ENCODE measurements at regions of chr6 and their contacts with region 1.

Region 1: GRCh38 chr6:159463119-159463829 is 229.8 kb downstream of the SOD2 start:
- DNase-seq: peak; percentile 11
- H3K4me3 ChIP-seq: no peak overlapping the region
- H3K27ac ChIP-seq: no peak overlapping the region
- H3K4me1 ChIP-seq: no peaks in the 10 kb centered on the region
- H3K27me3 ChIP-seq: peaks cover 2% of the 10 kb centered on the region
- CTCF ChIP-seq: peak; percentile 27 to 31

Region 2: DNA sequence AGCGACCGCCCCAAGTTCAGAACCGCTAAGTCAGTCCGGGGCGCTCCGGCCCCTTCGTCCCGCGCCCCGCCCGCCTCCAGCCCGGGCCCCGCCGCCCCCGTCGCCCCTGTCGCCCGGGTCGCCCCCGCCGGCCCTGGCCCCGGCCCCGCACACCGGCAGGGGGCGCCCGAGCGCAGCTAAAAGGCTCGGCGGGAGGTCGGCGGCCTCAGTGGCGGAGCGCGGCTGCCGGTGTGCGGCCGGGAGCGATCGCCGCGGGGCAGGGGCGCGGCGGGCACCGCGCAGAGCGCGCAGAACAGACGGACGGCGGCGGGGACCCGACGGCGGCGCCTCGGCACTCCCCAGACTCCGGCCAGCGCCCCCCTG is 294.1 kb before region 1 on chr6 and contains the start of gene FNDC1:
- CTCF ChIA-PET with region 1: no interaction called
- dilution Hi-C with region 1: no loop called
- in situ Hi-C with region 1: loop called in 1 of 2 experiments (anchors 5 kb)
- intact Hi-C with region 1: loop called (anchors 1 kb)
- DNase-seq: no peak
- H3K4me3 ChIP-seq: peak within 1 kb of the TSS in 2 of 3 experiments; percentile 11 to 28
- H3K27ac ChIP-seq: no peak within 1 kb of the TSS
- H3K4me1 ChIP-seq: peaks cover 12% of the 10 kb centered on the region
- H3K27me3 ChIP-seq: peaks cover 27% of the 10 kb centered on the region
- CTCF ChIP-seq: peak in 1 of 2 donors; percentile 11
- total RNA-seq, gene FNDC1: 0.05 to 0.33 TPM

Region 3: DNA sequence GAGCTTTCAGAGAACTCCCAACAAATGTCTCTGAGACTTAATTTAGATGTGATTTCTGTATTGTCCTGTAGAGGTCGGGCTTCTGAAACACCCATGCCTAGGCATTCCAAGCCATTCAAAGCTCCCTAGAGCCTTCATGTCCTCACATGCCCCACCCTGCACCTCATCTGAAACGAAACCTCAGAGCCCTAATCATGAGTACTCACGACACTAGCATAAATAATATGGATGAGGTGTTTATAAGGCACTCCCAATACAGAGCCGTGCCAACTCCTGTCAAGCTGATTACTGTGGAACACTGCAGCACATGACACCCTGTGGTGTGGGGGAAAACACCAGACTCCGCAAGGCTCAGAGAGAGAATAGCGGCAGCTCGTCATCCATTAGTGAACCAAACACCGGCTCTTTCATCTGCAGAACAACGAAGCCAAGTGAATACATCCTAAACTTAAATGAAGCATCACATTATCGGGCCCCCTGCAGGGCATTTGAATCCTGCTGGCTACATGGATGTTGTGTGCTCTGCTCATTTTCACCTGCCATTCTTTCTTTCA is 210.2 kb before region 1 on chr6:
- CTCF ChIA-PET with region 1: interaction called, 8 read pairs
- dilution Hi-C with region 1: no loop called
- in situ Hi-C with region 1: no loop called
- intact Hi-C with region 1: loop called (anchors 1 kb)
- DNase-seq: peak; percentile 94
- H3K4me3 ChIP-seq: peak overlapping the region; percentile 30 to 41 (median 37)
- H3K27ac ChIP-seq: peak overlapping the region; percentile 21
- H3K4me1 ChIP-seq: peaks cover 4% of the 10 kb centered on the region
- H3K27me3 ChIP-seq: no peaks in the 10 kb centered on the region
- CTCF ChIP-seq: peak; percentile 70 to 80

Region 4: DNA sequence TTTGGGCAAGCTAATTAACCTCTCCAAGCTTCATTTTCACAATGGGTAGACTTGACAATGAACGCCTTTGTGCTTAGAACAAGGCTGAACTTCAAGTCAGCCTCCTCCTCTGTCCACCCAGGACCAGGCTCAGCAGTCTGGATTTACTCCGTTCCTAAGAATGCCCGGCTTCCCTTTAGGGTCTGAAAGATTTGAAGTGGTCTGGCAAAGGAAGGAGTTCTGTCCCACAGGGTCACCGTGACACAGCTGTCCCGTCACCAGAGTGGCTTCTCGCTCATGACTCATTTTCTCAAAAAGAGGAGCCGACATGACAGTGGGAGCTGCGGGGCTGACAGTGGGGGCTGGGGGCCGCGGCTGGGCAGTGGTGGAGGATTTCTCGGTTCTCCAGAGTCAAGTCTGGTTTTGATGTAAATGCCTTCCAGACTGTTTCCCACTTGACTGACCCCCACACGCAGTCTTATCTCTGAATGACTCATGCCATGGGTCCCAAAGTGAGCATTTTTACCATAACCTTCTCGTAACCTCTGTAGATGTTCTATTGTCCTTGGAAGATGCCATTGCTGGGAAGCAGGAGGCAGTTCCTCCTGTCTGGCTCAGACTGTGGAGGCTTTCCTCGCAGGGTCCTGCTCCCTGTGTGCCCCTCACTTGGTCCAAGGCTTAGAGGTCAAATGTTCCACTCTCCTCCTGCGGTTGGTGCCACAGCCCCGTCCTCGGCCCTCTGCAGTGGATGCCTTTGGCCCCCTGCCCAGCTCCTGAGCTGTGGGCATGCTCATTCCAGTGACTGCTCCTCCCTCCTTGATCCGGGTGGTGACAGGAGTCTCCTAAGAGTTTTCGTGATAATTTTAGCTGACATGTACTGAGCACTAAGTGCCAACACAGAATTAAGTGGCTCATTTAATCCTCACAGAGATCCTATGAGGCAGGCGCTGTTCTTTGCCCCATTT is 41.0 kb before region 1 on chr6:
- CTCF ChIA-PET with region 1: no interaction called
- dilution Hi-C with region 1: no loop called
- in situ Hi-C with region 1: no loop called
- intact Hi-C with region 1: no loop called
- DNase-seq: no peak
- H3K4me3 ChIP-seq: no peak overlapping the region
- H3K27ac ChIP-seq: no peak overlapping the region
- H3K4me1 ChIP-seq: no peaks in the 10 kb centered on the region
- H3K27me3 ChIP-seq: no peaks in the 10 kb centered on the region
- CTCF ChIP-seq: no peak

Region 5: GRCh38 chr6:159434410-159434809 is 28.9 kb before region 1 on chr6:
- CTCF ChIA-PET with region 1: no interaction called
- dilution Hi-C with region 1: no loop called
- in situ Hi-C with region 1: no loop called
- intact Hi-C with region 1: no loop called
- DNase-seq: no peak
- H3K4me3 ChIP-seq: no peak overlapping the region
- H3K27ac ChIP-seq: no peak overlapping the region
- H3K4me1 ChIP-seq: no peaks in the 10 kb centered on the region
- H3K27me3 ChIP-seq: no peaks in the 10 kb centered on the region
- CTCF ChIP-seq: no peak

Region 6: DNA sequence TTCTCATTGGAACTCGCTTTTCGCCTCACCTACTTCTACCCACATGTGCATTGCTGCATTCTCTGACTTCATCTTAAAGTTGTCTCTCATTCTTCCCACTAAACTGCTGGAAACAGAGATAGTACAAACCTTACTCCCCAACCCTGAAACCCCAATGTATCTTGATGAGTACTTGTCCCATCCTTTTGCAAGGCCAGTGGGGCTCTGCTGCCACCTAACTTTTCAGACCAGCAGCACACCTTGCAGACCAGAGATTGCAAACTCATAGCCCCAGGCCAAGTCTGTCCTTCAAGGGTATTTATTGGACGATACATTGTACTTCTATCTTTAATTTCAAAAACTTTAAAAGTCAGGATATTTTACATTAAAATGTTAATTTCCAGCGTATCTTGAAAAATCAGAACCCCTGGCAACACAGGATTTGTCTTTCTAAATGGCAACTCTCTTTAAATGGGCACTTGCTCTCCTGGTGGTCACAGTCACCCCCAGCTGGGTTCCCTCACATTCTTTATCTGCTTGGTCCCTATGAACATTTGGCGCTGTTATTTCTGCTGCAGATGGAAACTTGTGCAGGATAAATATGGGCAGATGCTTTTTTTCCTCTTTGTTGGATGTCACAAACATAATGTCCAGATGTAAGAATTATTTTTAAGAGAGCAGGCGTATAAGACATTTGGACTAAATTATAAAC is 145.8 kb after region 1 on chr6:
- CTCF ChIA-PET with region 1: interaction called, 4 read pairs
- dilution Hi-C with region 1: no loop called
- in situ Hi-C with region 1: no loop called
- intact Hi-C with region 1: loop called (anchors 1 kb)
- DNase-seq: peak; percentile 50
- H3K4me3 ChIP-seq: no peak overlapping the region
- H3K27ac ChIP-seq: no peak overlapping the region
- H3K4me1 ChIP-seq: no peaks in the 10 kb centered on the region
- H3K27me3 ChIP-seq: no peaks in the 10 kb centered on the region
- CTCF ChIP-seq: peak; percentile 92 to 98

Region 7: DNA sequence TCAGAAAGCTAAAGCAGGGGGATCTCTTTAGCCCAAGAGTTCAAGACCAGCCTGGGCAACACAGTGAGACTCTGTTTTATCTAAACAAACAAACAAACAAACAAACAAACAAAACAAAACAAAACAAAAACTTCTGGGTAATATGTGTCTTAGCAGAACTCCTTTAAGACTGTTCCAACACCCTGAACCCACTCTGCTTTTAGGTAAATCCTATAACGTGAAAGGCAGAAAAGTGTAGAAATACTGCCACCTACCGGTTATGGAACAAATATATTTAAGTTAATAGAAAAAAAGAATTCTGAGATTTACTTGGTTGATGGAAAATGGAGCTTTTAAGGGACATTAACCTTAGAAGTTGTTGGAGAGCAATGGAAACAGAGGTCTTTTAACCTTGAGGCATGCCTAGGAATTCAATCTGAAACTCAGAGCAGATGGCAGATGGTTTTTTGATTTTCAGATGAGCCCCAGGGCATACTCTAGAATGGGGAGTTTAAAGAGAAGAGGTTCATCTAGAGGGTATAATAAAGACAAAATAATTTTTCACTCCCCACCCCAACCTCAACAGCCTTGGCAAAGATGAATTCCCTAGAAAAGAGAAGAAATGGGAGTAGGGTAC is 191.3 kb after region 1 on chr6:
- CTCF ChIA-PET with region 1: interaction called, 10 read pairs
- dilution Hi-C with region 1: no loop called
- in situ Hi-C with region 1: no loop called
- intact Hi-C with region 1: loop called (anchors 2 kb)
- DNase-seq: peak; percentile 24
- H3K4me3 ChIP-seq: no peak overlapping the region
- H3K27ac ChIP-seq: no peak overlapping the region
- H3K4me1 ChIP-seq: no peaks in the 10 kb centered on the region
- H3K27me3 ChIP-seq: no peaks in the 10 kb centered on the region
- CTCF ChIP-seq: peak; percentile 43 to 58

Measured in mammary epithelial cell (primary cell).